ENCODE measurements at regions of chr7 and their contacts with region 1.

Region 1: GRCh38 chr7:28732071-28732869 is 225.9 kb downstream of the TRIL start:
- DNase-seq: peak; percentile 46
- ATAC-seq: peak; percentile 38
- H3K4me3 ChIP-seq: no peak overlapping the region
- H3K27ac ChIP-seq: no peak overlapping the region
- H3K4me1 ChIP-seq: peaks cover 38% of the 10 kb centered on the region
- H3K27me3 ChIP-seq: no peaks in the 10 kb centered on the region
- CTCF ChIP-seq: no peak

Region 2: GRCh38 chr7:28298870-28299518 is 433.3 kb before region 1 on chr7:
- CTCF ChIA-PET with region 1: no interaction called
- POLR2A ChIA-PET with region 1: no interaction called
- intact Hi-C with region 1: loop called (anchors 5 kb)
- DNase-seq: peak; percentile 85
- ATAC-seq: peak; percentile 94
- H3K4me3 ChIP-seq: no peak overlapping the region
- H3K27ac ChIP-seq: 0 out of 2 replicates have a peak overlapping the region, but pooled peaks have one; percentile 13
- H3K4me1 ChIP-seq: peaks cover 13% of the 10 kb centered on the region
- H3K27me3 ChIP-seq: no peaks in the 10 kb centered on the region
- CTCF ChIP-seq: peak; percentile 82

Region 3: DNA sequence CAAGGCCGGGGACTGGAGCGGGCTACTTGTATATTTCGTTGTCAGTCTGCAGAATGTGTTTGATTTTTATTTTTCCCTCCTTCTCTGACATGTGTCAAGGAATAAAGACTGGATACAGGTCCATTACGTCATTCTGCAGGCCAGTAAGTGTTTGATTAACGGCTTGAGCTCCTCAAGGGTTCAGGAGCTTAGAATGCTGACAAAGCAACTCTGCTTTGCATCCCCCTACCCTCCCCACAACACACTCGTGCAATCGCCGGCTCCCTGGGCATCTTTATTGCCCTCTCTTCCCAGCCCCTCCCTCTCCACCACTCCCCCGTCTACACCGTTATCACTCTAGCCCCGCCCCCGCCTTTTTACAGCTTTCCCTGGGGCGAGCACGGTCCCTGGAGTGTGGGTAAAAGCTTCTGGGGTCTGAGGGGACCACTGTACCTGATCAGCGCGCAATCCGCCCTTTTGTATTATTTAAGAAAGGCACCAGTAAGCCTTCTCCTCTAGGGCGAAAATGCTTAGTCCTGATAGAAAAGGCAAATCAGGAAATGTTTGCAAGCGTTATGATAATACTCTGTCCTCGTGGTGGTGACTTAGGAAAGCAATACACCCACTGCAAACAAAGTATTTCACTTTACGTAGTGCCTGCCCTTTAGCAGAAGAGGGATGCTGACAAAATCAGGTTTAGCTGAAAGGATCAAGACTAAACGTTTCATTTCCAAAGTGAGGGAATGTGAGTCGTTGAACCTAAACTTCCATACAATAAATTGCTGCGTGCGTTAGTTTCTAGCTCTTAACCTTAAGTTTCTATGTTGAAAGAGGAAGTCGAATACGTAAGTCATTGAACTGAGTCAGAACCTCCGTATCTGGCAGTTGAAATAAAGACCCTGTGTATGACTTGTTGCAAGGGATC is 321.4 kb before region 1 on chr7:
- CTCF ChIA-PET with region 1: no interaction called
- POLR2A ChIA-PET with region 1: no interaction called
- intact Hi-C with region 1: loop called (anchors 10 kb)
- DNase-seq: peak; percentile 37
- ATAC-seq: 0 out of 2 replicates have a peak, but pooled peaks have one; percentile 5
- H3K4me3 ChIP-seq: peak overlapping the region; percentile 87
- H3K27ac ChIP-seq: no peak overlapping the region
- H3K4me1 ChIP-seq: peaks cover 28% of the 10 kb centered on the region
- H3K27me3 ChIP-seq: peaks cover 33% of the 10 kb centered on the region
- CTCF ChIP-seq: no peak

Region 4: DNA sequence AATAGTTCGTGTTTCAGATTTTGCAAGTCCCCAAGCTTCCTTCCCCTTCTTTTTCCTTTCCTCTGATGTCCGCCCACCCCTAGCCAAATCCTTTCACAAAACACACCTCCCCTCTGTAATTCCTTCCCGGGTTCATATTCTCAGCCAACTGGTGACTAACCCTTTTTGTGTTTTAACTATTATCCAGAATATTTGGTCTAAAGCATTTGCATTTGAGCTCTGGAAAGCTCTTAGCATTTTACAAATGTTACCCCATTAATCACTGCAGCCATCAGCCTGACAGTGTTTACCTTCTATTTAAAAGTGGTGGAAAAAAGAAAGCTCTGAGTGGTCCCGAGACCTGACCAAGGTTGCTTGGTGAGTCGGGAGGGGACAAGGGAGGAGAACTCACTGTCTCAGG is 180.9 kb before region 1 on chr7:
- CTCF ChIA-PET with region 1: no interaction called
- POLR2A ChIA-PET with region 1: no interaction called
- intact Hi-C with region 1: no loop called
- DNase-seq: no peak
- ATAC-seq: no peak
- H3K4me3 ChIP-seq: no peak overlapping the region
- H3K27ac ChIP-seq: no peak overlapping the region
- H3K4me1 ChIP-seq: no peaks in the 10 kb centered on the region
- H3K27me3 ChIP-seq: peaks cover 20% of the 10 kb centered on the region; the same call in 1 of the 2 replicates
- CTCF ChIP-seq: no peak

Region 5: DNA sequence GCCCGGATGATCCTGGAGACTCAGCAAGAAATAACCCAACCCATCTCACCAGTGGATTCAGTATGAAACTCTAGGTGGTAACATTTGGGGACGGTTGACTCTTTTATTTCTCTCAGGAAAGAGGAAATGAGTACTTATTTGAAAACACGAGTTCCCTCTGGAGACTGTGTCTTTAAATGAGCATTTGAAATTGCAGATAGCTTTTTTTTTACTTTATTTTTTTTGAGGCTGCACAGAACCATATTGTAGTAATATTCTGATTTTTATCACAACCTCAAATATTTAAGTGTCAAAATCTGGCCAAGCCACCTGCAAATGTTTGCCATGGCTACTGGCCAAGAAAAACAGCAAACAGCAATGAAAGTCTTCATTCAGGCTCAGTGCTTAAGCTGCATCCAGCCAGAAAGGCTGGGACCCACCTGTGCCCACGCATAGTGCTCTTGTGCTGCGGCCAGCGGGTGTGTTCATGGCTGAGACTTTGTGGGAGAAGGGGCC is 159.2 kb before region 1 on chr7:
- CTCF ChIA-PET with region 1: no interaction called
- POLR2A ChIA-PET with region 1: no interaction called
- intact Hi-C with region 1: loop called (anchors 5 kb)
- DNase-seq: peak; percentile 88
- ATAC-seq: peak; percentile 66
- H3K4me3 ChIP-seq: no peak overlapping the region; the same call in 1 of the 2 replicates
- H3K27ac ChIP-seq: peak overlapping the region; percentile 15
- H3K4me1 ChIP-seq: peaks cover 46% of the 10 kb centered on the region
- H3K27me3 ChIP-seq: no peaks in the 10 kb centered on the region; the same call in 1 of the 2 replicates
- CTCF ChIP-seq: no peak

Region 6: DNA sequence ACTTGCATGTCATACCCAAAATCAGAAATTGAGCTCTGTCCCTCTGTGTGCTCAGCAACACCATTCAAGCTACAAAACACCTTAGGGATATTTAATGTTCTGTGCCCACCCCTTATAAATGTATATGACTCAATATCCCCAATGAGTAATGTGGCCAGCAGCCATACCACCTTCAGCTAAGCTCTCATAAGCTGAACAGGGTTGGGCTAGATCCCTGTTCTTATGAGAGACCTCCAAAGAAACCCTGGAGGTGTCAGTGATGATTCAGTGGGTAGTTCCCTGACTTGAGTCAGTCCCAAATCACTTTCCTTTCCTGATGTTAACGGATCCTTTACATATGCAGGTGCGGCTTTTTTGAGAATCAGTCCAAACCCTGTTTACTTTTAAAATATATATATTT is 66.1 kb before region 1 on chr7:
- CTCF ChIA-PET with region 1: no interaction called
- POLR2A ChIA-PET with region 1: no interaction called
- intact Hi-C with region 1: loop called (anchors 1 kb)
- DNase-seq: peak; percentile 95
- ATAC-seq: peak; percentile 96
- H3K4me3 ChIP-seq: no peak overlapping the region
- H3K27ac ChIP-seq: peak overlapping the region; percentile 76
- H3K4me1 ChIP-seq: peaks cover 28% of the 10 kb centered on the region
- H3K27me3 ChIP-seq: no peaks in the 10 kb centered on the region
- CTCF ChIP-seq: no peak

Region 7: GRCh38 chr7:28704706-28705105 is 27.6 kb before region 1 on chr7:
- CTCF ChIA-PET with region 1: no interaction called
- POLR2A ChIA-PET with region 1: no interaction called
- intact Hi-C with region 1: no loop called
- DNase-seq: no peak
- ATAC-seq: no peak
- H3K4me3 ChIP-seq: no peak overlapping the region
- H3K27ac ChIP-seq: no peak overlapping the region
- H3K4me1 ChIP-seq: no peaks in the 10 kb centered on the region
- H3K27me3 ChIP-seq: no peaks in the 10 kb centered on the region
- CTCF ChIP-seq: no peak

Region 8: DNA sequence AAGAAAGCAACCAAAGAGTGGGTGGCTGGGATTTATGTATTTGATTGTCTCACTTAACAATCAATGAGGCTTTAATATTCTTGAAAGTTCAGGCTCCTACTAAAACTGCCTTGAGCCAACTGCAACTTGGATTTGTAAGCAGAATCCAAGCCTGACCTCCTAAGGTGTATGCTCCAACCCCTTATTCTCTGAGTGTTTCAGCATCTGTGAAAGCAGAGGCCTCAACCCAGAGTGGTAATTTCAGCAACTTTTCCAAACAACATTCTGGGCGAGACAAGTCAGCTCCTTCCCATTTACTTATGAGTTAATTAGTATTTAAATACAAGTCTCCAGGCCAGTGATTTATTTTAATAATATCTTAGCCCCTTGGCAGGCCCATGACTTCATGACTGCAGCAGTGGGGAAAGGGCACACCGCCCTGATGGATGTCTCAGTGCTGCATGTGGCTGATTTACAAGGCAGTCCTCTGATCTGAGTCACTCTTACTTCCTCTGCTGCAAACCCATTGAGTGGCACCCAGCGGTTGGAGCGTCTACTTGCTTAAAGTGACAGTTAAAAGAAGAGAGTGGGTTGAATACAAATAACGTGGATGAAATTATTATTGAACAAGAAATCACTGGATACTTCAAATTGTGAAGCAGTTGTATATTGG is 16.8 kb after region 1 on chr7:
- CTCF ChIA-PET with region 1: interaction called, 3 read pairs
- POLR2A ChIA-PET with region 1: interaction called, 13 read pairs
- intact Hi-C with region 1: loop called (anchors 1 kb)
- DNase-seq: peak; percentile 86
- ATAC-seq: peak; percentile 100
- H3K4me3 ChIP-seq: no peak overlapping the region
- H3K27ac ChIP-seq: peak overlapping the region; percentile 44
- H3K4me1 ChIP-seq: peaks cover 13% of the 10 kb centered on the region
- H3K27me3 ChIP-seq: no peaks in the 10 kb centered on the region
- CTCF ChIP-seq: peak; percentile 30

Region 9: GRCh38 chr7:28808796-28809527 is 76.7 kb after region 1 on chr7:
- CTCF ChIA-PET with region 1: no interaction called
- POLR2A ChIA-PET with region 1: interaction called, 3 read pairs
- intact Hi-C with region 1: loop called (anchors 1 kb)
- DNase-seq: peak; percentile 5
- ATAC-seq: no peak
- H3K4me3 ChIP-seq: no peak overlapping the region
- H3K27ac ChIP-seq: no peak overlapping the region
- H3K4me1 ChIP-seq: peaks cover 30% of the 10 kb centered on the region
- H3K27me3 ChIP-seq: no peaks in the 10 kb centered on the region
- CTCF ChIP-seq: no peak; the same call in 1 of the 2 replicates